Mammary epithelial cell (primary cell): ENCODE measurements at regions of chr15 and their contacts with region 1.

Region 1: DNA sequence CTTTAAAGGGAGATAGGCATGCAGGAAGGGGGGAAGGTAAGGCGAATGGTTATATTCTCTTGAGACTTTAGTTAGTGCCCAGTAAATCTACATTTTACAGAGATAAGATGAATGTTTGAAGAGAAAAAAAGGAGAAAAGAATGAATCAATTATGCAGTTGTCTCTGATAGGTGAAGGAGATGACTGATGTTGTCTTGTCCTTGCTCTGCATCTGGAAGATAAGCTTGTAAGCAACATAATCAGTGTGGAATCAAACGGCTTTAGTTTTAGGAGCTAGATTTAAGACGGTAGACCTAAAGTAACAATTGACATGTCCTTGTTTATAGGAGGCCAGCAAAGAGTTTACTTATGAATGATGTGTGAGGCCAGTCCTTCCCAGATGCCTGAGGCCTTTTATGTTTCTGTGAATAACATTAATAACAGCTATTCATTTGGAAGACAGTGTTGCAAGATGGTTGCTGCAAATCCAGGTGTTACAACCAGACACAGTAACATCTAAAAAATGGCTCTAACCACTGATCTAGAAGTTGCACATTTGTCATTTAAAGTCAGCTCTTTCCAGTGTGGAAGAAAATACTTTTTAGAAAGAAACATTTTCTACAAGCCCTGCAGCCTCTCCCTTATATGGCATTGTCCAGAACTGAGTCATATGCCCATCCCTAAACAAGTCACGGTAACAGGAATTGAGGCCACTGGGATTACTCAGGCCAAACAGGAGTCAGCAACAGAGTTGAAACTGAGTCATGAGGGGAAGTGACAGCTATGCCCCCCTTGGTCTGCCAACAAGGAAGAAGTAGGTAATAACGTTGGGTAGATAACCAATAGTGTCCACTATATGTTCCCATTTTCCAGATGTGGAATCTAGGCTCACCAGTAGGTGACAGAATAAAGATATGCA is 77.5 kb upstream of the FBN1 start:
- DNase-seq: peak; percentile 91
- H3K4me3 ChIP-seq: no peak overlapping the region
- H3K27ac ChIP-seq: peak overlapping the region; percentile 80
- H3K4me1 ChIP-seq: peaks cover 17% of the 10 kb centered on the region
- H3K27me3 ChIP-seq: no peaks in the 10 kb centered on the region
- CTCF ChIP-seq: no peak

Region 2: GRCh38 chr15:48221885-48222284 is 501.1 kb before region 1 on chr15:
- CTCF ChIA-PET with region 1: no interaction called
- dilution Hi-C with region 1: no loop called
- in situ Hi-C with region 1: no loop called
- intact Hi-C with region 1: no loop called
- DNase-seq: no peak
- H3K4me3 ChIP-seq: no peak overlapping the region
- H3K27ac ChIP-seq: no peak overlapping the region
- H3K4me1 ChIP-seq: no peaks in the 10 kb centered on the region
- H3K27me3 ChIP-seq: no peaks in the 10 kb centered on the region
- CTCF ChIP-seq: no peak

Region 3: DNA sequence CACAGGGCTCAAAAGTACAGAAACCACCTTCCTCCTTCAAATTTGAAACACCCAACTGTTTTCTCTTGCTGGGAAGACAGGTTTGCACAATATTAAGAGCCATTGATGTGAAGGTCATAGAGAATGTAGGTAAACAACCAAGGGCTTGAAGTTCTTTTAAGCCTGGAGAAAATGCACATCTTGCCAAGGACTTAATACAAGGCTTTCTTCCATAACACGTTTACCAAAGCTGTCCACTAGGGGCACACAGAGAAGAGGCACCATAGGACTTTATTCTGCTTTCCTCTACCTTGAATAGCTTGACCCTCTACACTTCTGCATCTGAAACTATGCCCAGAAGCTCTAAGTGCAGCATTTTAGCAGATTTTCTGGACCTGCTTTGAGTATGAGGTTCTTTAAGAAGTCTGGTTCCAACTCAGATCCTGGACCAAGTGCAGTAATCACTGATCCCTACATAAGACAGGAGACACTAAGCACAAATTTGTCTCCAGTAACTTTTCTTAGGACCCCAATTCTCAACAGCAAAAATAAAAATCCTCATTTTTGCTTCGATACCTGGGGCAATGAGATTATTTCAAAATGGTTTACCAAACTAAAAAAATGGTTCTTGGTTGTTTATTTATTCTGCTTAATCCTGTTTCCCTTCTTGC is 215.5 kb before region 1 on chr15:
- CTCF ChIA-PET with region 1: no interaction called
- dilution Hi-C with region 1: no loop called
- in situ Hi-C with region 1: no loop called
- intact Hi-C with region 1: no loop called
- DNase-seq: peak; percentile 37
- H3K4me3 ChIP-seq: no peak overlapping the region
- H3K27ac ChIP-seq: no peak overlapping the region
- H3K4me1 ChIP-seq: no peaks in the 10 kb centered on the region
- H3K27me3 ChIP-seq: no peaks in the 10 kb centered on the region
- CTCF ChIP-seq: peak; percentile 76 to 79

Region 4: GRCh38 chr15:48682949-48683651 is 39.9 kb before region 1 on chr15:
- CTCF ChIA-PET with region 1: no interaction called
- dilution Hi-C with region 1: no loop called
- in situ Hi-C with region 1: no loop called
- intact Hi-C with region 1: loop called (anchors 2 kb)
- DNase-seq: peak; percentile 61
- H3K4me3 ChIP-seq: no peak overlapping the region
- H3K27ac ChIP-seq: peak overlapping the region; percentile 30
- H3K4me1 ChIP-seq: peaks cover 39% of the 10 kb centered on the region
- H3K27me3 ChIP-seq: no peaks in the 10 kb centered on the region
- CTCF ChIP-seq: no peak

Region 5: GRCh38 chr15:48695088-48695826 is 27.8 kb before region 1 on chr15:
- CTCF ChIA-PET with region 1: no interaction called
- dilution Hi-C with region 1: no loop called
- in situ Hi-C with region 1: no loop called
- intact Hi-C with region 1: loop called (anchors 1 kb)
- DNase-seq: peak; percentile 81
- H3K4me3 ChIP-seq: no peak overlapping the region
- H3K27ac ChIP-seq: peak overlapping the region; percentile 36
- H3K4me1 ChIP-seq: peaks cover 30% of the 10 kb centered on the region
- H3K27me3 ChIP-seq: no peaks in the 10 kb centered on the region
- CTCF ChIP-seq: no peak

Region 6: DNA sequence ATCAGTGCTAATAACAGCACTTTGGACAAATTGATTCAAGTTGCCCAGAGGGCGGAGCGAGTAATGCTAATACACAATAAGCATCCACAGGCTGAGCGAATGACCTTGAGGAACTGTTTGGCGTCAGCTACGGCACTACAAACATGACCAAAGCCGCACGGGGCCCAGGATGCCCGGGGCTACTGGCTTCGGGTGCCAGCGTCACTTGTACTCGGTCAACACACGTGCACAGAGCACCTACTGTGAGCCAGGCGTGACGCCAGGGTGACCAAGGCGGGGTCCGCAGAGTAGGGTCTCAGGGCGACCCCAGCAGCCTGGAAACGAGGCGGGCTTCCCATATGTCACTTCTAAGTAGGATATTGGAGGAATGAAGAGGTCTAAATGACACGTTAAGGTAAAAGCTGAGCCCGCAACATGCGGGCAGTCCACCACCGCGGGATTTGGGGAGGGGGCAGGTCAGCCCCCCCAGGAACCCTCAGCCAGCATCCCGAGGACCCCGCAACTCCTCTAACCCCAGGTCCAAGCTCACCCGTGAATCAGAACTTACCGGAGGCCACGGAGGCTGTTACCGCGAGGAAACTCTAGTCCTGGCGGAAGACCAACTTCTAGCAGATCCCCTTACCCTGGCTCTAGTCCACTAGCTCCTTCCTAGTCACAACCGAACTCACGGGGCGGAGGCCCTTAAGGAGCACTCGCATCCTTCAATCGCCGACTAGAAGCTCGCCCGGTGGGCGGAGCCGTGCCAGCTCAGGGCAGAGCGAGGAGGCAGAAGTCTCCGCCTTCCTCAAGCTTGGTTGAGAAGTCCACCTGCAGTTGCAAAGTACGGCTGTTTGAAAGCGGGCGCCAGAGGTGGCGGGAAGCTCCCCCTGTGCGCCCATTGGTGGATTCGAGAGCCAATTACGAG is 87.7 kb after region 1 on chr15 and contains the start of gene CEP152:
- CTCF ChIA-PET with region 1: no interaction called
- dilution Hi-C with region 1: no loop called
- in situ Hi-C with region 1: no loop called
- intact Hi-C with region 1: loop called (anchors 5 kb)
- DNase-seq: peak; percentile 100
- H3K4me3 ChIP-seq: peak within 1 kb of the TSS; percentile 84 to 93 (median 88)
- H3K27ac ChIP-seq: peak within 1 kb of the TSS; percentile 89
- H3K4me1 ChIP-seq: peaks cover 12% of the 10 kb centered on the region
- H3K27me3 ChIP-seq: no peaks in the 10 kb centered on the region
- CTCF ChIP-seq: no peak
- total RNA-seq, gene CEP152: 2.5 to 9.2 TPM